ENCODE measurements at regions of chr12 and their contacts with region 1.

Region 1: GRCh38 chr12:124767066-124767821 is 96.4 kb downstream of the SCARB1 start:
- ATAC-seq: peak; percentile 48 to 94 (median 92)
- H3K4me3 ChIP-seq: no peak overlapping the region
- H3K27ac ChIP-seq: no peak overlapping the region
- H3K4me1 ChIP-seq: peaks cover 15 to 21% of the 10 kb centered on the region in 2 donors

Region 2: GRCh38 chr12:124044809-124045321 is 722.4 kb before region 1 on chr12:
- in situ Hi-C with region 1: loop called (anchors 5 to 25 kb)
- ATAC-seq: peak; percentile 12 to 89 (median 64)
- H3K4me3 ChIP-seq: no peak overlapping the region
- H3K27ac ChIP-seq: no peak overlapping the region
- H3K4me1 ChIP-seq: peaks cover 15 to 19% of the 10 kb centered on the region in 2 donors

Region 3: GRCh38 chr12:124347716-124348357 is 419.4 kb before region 1 on chr12:
- in situ Hi-C with region 1: loop called in 1 of 9 experiments (anchors 25 kb)
- ATAC-seq: peak in 1 of 8 experiments; percentile 11
- H3K4me3 ChIP-seq: no peak overlapping the region
- H3K27ac ChIP-seq: no peak overlapping the region
- H3K4me1 ChIP-seq: no peaks in the 10 kb centered on the region

Region 4: GRCh38 chr12:124567661-124568373 is 199.4 kb before region 1 on chr12:
- in situ Hi-C with region 1: loop called in 6 of 9 experiments (anchors 25 kb)
- ATAC-seq: peak; percentile 58 to 67 (median 64)
- H3K4me3 ChIP-seq: peak overlapping the region; percentile 45 to 95 (median 68)
- H3K27ac ChIP-seq: peak overlapping the region; percentile 81 to 92
- H3K4me1 ChIP-seq: peaks cover 23 to 32% of the 10 kb centered on the region in 2 donors

Region 5: GRCh38 chr12:124917135-124917840 is 150.0 kb after region 1 on chr12:
- in situ Hi-C with region 1: no loop called
- ATAC-seq: peak; percentile 62 to 86 (median 82)
- H3K4me3 ChIP-seq: peak overlapping the region; percentile 23 to 77 (median 28)
- H3K27ac ChIP-seq: peak overlapping the region; percentile 97 to 100
- H3K4me1 ChIP-seq: peaks cover 49 to 52% of the 10 kb centered on the region in 2 donors

Region 6: GRCh38 chr12:125172231-125172850 is 405.1 kb after region 1 on chr12:
- in situ Hi-C with region 1: no loop called
- ATAC-seq: no peak
- H3K4me3 ChIP-seq: no peak overlapping the region
- H3K27ac ChIP-seq: no peak overlapping the region
- H3K4me1 ChIP-seq: no peaks in the 10 kb centered on the region